Ovary (tissue), 10 donors: ENCODE measurements at regions of chr18 and their contacts with region 1.

Region 1: DNA sequence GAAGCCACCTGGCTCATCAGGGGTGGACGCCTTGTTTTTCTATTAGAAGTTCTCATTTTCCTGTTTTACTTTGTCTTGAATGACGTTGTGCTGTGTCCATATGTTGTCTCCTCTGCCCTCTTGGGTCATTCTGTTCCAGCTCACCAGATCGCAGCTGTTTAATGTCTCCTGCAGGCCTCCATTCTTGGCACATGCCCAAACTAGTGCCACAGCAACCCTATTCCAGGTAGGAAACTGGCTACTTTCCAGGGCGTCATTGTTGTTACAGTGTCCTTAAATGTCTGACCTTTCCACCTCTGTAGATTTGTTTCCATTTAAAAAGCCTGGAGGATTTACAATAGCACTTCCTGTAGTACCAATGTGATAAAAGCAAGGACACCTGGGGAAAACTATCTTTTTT is 500.7 kb downstream of the METTL4 start:
- DNase-seq: no peak
- H3K4me3 ChIP-seq: no peak overlapping the region
- H3K27ac ChIP-seq: no peak overlapping the region
- H3K4me1 ChIP-seq: no peaks in the 10 kb centered on the region
- H3K27me3 ChIP-seq: no peaks in the 10 kb centered on the region
- CTCF ChIP-seq: no peak
- EP300 ChIP-seq: no peak
- POLR2A ChIP-seq: no peak

Region 2: DNA sequence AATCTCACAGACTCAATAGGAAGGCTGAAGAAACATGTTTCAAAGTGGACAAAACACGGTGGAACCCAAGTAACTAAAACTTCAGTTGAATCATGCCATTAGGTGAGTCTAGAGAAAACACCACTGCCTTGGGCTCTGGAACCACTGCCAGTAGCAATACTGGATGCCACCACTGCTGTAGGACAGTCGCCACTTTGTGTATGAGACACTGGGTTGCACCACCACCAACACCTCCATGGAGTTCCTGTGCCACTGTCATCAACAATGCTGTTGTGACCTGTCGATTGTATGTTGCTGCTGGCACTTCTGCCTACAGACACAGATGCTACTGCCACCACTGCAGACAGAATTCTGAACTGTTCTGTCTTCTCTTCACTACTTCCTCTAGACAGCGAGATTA is 186.0 kb before region 1 on chr18:
- intact Hi-C with region 1: no loop called
- DNase-seq: no peak
- H3K4me3 ChIP-seq: no peak overlapping the region
- H3K27ac ChIP-seq: no peak overlapping the region
- H3K4me1 ChIP-seq: no peaks in the 10 kb centered on the region
- H3K27me3 ChIP-seq: no peaks in the 10 kb centered on the region
- CTCF ChIP-seq: no peak
- EP300 ChIP-seq: no peak
- POLR2A ChIP-seq: no peak

Region 3: DNA sequence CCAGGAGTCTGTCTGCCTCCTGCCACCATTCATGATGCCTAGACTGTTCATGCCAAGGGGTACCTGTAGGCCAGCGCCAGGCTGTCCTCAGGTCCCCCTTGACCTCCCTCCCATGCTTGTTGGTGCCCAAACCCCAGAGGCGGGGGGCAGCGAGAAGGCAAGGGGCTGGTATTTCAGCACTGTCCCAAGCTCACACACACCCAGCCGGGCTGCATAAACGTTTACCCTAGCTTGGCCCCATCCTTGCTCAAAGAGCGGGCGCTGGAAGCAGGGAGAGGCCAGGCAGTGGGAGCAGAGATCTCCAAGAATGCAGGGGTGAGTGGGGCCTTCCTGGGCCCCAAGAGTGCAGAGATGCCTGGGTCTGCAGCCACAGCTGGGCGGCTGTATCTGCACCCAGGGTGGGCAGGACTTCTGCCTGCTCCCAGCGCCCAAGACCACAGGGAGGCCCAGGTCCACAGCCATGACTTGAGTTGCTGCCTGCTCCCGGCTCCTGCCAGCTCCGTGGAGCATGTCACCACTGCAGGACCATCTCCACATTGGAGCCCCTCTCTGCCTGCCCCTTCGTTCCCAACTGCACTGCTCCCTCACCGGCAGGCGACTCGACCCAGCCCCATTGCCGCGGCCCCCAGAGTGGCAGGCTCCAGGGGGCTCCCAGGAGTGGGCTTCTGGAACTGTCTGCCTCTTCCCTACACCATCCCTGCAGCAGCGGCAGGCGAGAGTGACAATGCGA is 115.9 kb before region 1 on chr18:
- intact Hi-C with region 1: no loop called
- DNase-seq: no peak
- H3K4me3 ChIP-seq: no peak overlapping the region
- H3K27ac ChIP-seq: no peak overlapping the region
- H3K4me1 ChIP-seq: no peaks in the 10 kb centered on the region
- H3K27me3 ChIP-seq: no peaks in the 10 kb centered on the region
- CTCF ChIP-seq: no peak
- EP300 ChIP-seq: no peak
- POLR2A ChIP-seq: no peak

Region 4: DNA sequence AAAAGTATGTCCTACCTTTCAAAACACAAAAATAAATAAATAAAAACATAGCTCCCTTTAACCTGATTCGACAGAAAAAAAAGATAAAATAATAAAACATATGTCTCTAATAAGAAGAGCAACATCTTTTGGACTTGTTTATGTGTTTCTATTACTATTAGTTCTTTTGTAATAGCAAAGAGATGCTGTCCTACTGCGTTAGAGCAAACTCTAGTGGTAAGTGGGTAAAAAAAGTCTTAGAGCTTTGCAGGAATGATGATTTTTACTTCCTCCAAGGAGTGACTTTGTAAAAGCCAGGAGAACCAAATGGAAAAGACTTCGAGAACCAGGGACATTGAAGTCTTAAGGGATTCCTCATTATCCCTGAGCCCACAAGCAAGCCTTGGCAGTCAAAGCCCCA is 50.6 kb after region 1 on chr18:
- intact Hi-C with region 1: loop called in 1 of 4 experiments (anchors 10 kb)
- DNase-seq: no peak
- H3K4me3 ChIP-seq: no peak overlapping the region
- H3K27ac ChIP-seq: no peak overlapping the region
- H3K4me1 ChIP-seq: no peaks in the 10 kb centered on the region
- H3K27me3 ChIP-seq: no peaks in the 10 kb centered on the region
- CTCF ChIP-seq: no peak
- EP300 ChIP-seq: no peak
- POLR2A ChIP-seq: no peak

Region 5: DNA sequence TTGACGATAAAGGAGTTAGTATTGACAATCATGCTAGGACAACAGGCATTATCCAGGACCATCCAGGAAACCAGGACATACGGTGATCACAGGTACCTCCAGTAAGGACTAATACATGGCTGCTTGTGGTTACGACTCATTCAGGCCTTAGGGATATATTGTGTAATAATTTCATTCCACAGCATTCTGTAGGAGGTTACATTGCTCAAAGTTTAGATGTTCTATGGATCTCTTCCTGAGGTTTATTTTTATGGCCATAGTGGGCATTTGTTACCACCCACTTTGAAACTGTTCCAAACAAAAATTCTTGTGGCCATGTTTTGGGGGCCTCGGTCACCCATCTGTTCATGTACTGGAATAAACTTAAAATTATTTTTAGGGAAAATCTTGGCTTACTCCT is 69.1 kb after region 1 on chr18:
- intact Hi-C with region 1: loop called in 1 of 4 experiments (anchors 10 kb)
- DNase-seq: no peak
- H3K4me3 ChIP-seq: no peak overlapping the region
- H3K27ac ChIP-seq: no peak overlapping the region
- H3K4me1 ChIP-seq: no peaks in the 10 kb centered on the region
- H3K27me3 ChIP-seq: no peaks in the 10 kb centered on the region
- CTCF ChIP-seq: no peak
- EP300 ChIP-seq: no peak
- POLR2A ChIP-seq: no peak